ENCODE measurements at regions of chr17 and their contacts with region 1.

Region 1: DNA sequence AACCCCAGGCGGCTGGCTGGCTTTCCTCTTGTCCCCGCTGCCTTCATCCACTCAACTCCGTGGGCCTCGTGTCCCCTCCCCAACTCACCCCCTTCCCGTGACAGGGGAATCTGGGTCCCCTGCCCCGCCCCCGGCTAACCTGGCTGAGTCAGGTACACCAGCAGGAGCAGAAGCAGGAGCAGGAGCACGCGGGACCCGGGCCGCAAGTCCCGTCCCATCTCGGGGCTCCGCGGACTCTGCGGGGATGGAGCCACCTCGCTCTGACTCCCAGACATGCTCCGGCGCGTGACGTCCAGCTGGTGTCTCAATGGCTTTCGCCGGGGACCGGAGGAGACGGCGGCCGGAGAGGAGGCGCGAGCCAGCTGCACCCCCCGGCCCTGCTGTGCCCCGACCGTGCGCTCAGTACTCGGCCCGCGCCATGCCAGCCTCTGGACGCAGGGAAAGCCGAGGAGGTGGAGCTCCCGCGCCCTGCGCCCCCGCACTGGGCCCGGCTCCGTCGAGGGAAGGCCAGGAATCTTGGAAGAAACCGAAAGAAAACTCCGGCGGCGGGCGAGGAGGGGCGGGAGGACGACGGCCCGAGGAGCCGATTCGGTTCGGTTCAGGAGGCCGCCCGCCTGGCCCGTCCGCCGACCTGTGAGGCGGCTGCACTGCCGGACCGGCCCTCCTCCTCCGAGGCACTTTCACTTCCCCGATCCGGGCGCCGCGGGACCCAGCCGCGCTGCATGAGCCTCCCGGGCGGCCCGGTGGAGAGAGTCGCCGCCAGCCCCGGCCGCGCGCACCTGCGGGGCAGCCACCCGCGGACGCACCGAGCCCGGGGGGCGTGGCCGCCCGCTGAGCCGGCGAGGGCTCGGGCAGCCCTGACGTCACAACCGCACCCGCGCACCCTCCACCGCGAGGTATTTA is at the starts of genes CXCL16 and ZMYND15:
- DNase-seq: peak in 13 of 14 experiments; percentile 40 to 89 (median 59)
- ATAC-seq: peak; percentile 70
- H3K4me3 ChIP-seq: peak within 1 kb of the TSS; percentile 72
- H3K4me3 Mint-ChIP-seq: peak within 1 kb of the TSS; percentile 97
- H3K27ac ChIP-seq: no peak within 1 kb of the TSS
- H3K27ac Mint-ChIP-seq: peak within 1 kb of the TSS; percentile 89
- H3K4me1 ChIP-seq: peaks cover 24% of the 10 kb centered on the region
- H3K4me1 Mint-ChIP-seq: peaks cover 23% of the 10 kb centered on the region
- H3K27me3 ChIP-seq: peaks cover 6 to 20% of the 10 kb centered on the region in 2 experiments
- H3K27me3 Mint-ChIP-seq: peaks cover 25% of the 10 kb centered on the region
- CTCF ChIP-seq: no peak
- total RNA-seq, gene CXCL16: 24.8 to 25.8 TPM
- total RNA-seq, gene ZMYND15: 3.1 to 3.3 TPM

Region 2: DNA sequence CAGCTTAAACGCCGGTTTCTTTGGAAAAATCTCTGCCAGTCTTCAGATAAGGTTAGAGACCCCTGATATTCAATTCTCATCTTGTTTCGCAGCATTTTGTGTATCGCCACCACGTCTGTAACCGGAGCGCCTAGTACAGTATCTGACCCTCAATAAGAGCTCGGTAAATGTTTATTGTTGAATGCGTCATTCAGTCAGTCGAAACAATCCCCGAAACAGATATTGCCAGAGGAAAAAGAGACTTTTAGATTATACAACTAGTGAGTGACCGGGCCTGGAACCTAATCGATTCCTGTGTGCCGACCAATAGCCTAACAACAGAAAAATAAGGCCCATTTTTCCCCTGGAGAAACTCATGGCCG is 36.1 kb before region 1 on chr17:
- CTCF ChIA-PET with region 1: no interaction called
- POLR2A ChIA-PET with region 1: no interaction called
- intact Hi-C with region 1: loop called in 1 of 2 experiments (anchors 5 kb)
- DNase-seq: no peak
- ATAC-seq: no peak
- H3K4me3 ChIP-seq: peak overlapping the region; percentile 76
- H3K4me3 Mint-ChIP-seq: peak overlapping the region; percentile 87
- H3K27ac ChIP-seq: peak overlapping the region; percentile 76 to 81
- H3K27ac Mint-ChIP-seq: peak overlapping the region; percentile 91
- H3K4me1 ChIP-seq: peaks cover 30% of the 10 kb centered on the region
- H3K4me1 Mint-ChIP-seq: peaks cover 44% of the 10 kb centered on the region
- H3K27me3 ChIP-seq: no peaks in the 10 kb centered on the region
- H3K27me3 Mint-ChIP-seq: no peaks in the 10 kb centered on the region
- CTCF ChIP-seq: no peak

Region 3: GRCh38 chr17:4852567-4853207 is 113.3 kb after region 1 on chr17:
- CTCF ChIA-PET with region 1: no interaction called
- POLR2A ChIA-PET with region 1: no interaction called
- intact Hi-C with region 1: no loop called
- DNase-seq: peak in 3 of 14 experiments; percentile 33 to 76 (median 70)
- ATAC-seq: peak; percentile 67
- H3K4me3 ChIP-seq: no peak overlapping the region
- H3K4me3 Mint-ChIP-seq: peak overlapping the region; percentile 36
- H3K27ac ChIP-seq: no peak overlapping the region
- H3K27ac Mint-ChIP-seq: peak overlapping the region; percentile 72
- H3K4me1 ChIP-seq: peaks cover 21% of the 10 kb centered on the region
- H3K4me1 Mint-ChIP-seq: peaks cover 52% of the 10 kb centered on the region
- H3K27me3 ChIP-seq: no peaks in the 10 kb centered on the region
- H3K27me3 Mint-ChIP-seq: no peaks in the 10 kb centered on the region
- CTCF ChIP-seq: no peak

Measured in CD4-positive, alpha-beta T cell (primary cell).